PC-3 (cell line): ENCODE measurements at regions of chr19 and their contacts with region 1.

Region 1: DNA sequence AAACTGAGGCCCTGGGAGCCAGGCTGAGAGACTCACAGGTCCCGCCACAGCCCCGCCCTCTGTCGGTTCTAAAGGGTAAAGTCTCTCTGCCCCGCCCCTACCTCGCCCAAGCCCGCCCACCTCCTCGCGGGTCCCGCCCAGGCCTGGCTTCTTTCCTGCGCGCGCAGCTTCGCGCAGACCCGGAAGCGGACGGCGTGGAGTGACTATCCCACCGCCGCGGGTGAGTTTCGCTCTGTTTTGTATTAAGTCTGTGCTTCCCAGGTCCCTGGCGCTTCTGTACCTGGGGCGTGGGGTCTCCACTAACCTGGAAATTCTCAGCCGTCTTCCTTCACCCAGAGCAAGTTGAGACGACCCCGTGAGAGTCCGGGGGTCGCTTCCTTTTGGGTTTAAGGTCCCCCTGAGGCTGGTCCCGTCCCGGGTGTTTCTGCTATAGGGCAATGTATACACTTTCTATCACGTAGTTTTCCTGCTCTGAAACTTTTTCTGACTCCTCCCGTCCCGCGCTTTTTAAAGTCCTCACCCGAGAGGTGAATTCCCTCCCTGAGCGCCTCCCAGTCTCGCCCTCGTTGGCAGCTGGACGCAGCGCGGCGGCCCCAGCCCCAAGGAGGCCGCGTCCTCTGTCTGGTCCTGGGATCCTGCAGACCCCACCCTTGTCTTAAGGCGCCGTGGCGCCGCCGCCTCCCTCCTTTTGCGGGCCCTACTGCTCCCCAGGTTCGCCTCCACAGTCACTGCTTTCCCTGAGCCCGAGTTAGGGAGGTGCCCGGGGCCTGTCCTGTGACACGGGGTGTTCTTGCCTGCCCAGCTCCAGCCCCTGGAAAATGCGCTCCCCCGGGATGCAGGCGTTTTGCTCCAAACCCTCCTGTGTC is at the start of gene ZNF765:
- DNase-seq: peak; percentile 94
- ATAC-seq: peak; percentile 88
- H3K4me3 ChIP-seq: peak within 1 kb of the TSS; percentile 87
- H3K27ac ChIP-seq: peak within 1 kb of the TSS; percentile 51
- H3K4me1 ChIP-seq: peaks cover 7% of the 10 kb centered on the region; the same call in 1 of the 2 replicates
- H3K27me3 ChIP-seq: no peaks in the 10 kb centered on the region
- CTCF ChIP-seq: peak; percentile 41
- total RNA-seq, gene ZNF765: 9.6 and 11.4 TPM in 2 replicates

Region 2: DNA sequence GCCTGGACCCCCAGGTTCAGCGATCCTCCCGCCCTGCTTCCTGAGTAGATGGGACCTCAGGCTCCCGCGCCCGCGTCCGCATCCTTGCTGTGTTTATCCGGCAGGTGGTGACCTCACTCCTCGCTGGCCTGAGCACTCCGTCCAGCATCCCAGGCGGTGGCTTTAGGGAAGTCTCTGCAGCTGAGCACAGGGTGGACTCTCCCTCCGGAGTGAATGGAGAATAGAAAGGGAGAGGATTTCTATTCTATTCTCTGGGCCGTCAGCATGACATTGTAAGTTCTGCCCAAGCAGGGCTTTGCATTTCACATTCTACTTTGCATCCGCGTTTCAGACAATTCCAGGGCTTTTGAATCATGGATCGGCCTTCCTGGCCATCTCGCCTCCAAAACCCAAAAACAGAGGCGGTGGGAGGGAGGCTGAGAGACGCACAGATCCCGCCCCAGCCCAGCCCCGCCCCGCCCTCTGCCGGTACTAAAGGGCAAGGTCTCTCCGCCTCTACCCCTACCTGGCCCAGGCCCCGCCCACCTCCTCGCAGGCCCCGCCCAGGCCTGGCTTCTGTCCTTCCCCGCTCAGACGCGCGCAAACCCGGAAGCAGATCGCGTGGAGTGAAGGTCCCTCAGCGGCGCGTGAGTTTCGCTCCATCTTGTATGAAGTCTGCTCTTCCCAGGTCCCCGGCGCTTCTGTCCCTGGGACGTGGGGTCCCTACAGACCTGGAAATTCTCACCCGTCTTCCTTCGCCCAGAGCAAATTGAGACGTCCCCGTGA is 29.9 kb before region 1 on chr19 and contains the start of gene ZNF525:
- CTCF ChIA-PET with region 1: interaction called, 3 read pairs
- POLR2A ChIA-PET with region 1: no interaction called
- intact Hi-C with region 1: loop called (anchors 1 kb)
- DNase-seq: peak; percentile 95
- ATAC-seq: peak; percentile 96
- H3K4me3 ChIP-seq: peak within 1 kb of the TSS; percentile 78
- H3K27ac ChIP-seq: peak within 1 kb of the TSS; percentile 58
- H3K4me1 ChIP-seq: no peaks in the 10 kb centered on the region
- H3K27me3 ChIP-seq: no peaks in the 10 kb centered on the region
- CTCF ChIP-seq: peak; percentile 50; the same call in 1 of the 2 replicates
- total RNA-seq, gene ZNF525: 13.1 and 25.6 TPM in 2 replicates

Region 3: GRCh38 chr19:53621885-53622740 is 226.9 kb after region 1 on chr19:
- CTCF ChIA-PET with region 1: no interaction called
- POLR2A ChIA-PET with region 1: no interaction called
- intact Hi-C with region 1: no loop called
- DNase-seq: no peak
- ATAC-seq: no peak
- H3K4me3 ChIP-seq: no peak overlapping the region
- H3K27ac ChIP-seq: no peak overlapping the region
- H3K4me1 ChIP-seq: no peaks in the 10 kb centered on the region
- H3K27me3 ChIP-seq: no peaks in the 10 kb centered on the region
- CTCF ChIP-seq: no peak